ENCODE measurements at regions of chr5 and their contacts with region 1.

Region 1: GRCh38 chr5:142655339-142656267 is 30.3 kb downstream of the FGF1 start:
- DNase-seq: peak; percentile 84
- H3K4me3 Mint-ChIP-seq: no peak overlapping the region
- H3K27ac Mint-ChIP-seq: no peak overlapping the region
- H3K4me1 Mint-ChIP-seq: no peaks in the 10 kb centered on the region
- H3K27me3 Mint-ChIP-seq: no peaks in the 10 kb centered on the region
- CTCF ChIP-seq: peak; percentile 99

Region 2: GRCh38 chr5:142597546-142598341 is 57.9 kb before region 1 on chr5:
- CTCF ChIA-PET with region 1: interaction called, 14 read pairs
- POLR2A ChIA-PET with region 1: no interaction called
- intact Hi-C with region 1: no loop called
- DNase-seq: peak; percentile 89
- H3K4me3 Mint-ChIP-seq: no peak overlapping the region
- H3K27ac Mint-ChIP-seq: no peak overlapping the region
- H3K4me1 Mint-ChIP-seq: peaks cover 16% of the 10 kb centered on the region
- H3K27me3 Mint-ChIP-seq: no peaks in the 10 kb centered on the region
- CTCF ChIP-seq: peak; percentile 20

Region 3: GRCh38 chr5:142618130-142618523 is 37.5 kb before region 1 on chr5:
- CTCF ChIA-PET with region 1: interaction called, 16 read pairs
- POLR2A ChIA-PET with region 1: no interaction called
- intact Hi-C with region 1: no loop called
- DNase-seq: no peak
- H3K4me3 Mint-ChIP-seq: no peak overlapping the region
- H3K27ac Mint-ChIP-seq: no peak overlapping the region
- H3K4me1 Mint-ChIP-seq: peaks cover 12% of the 10 kb centered on the region
- H3K27me3 Mint-ChIP-seq: no peaks in the 10 kb centered on the region
- CTCF ChIP-seq: no peak

Region 4: GRCh38 chr5:142644640-142645361 is 10.8 kb before region 1 on chr5:
- CTCF ChIA-PET with region 1: interaction called, 67 read pairs
- POLR2A ChIA-PET with region 1: interaction called, 30 read pairs
- intact Hi-C with region 1: no loop called
- DNase-seq: peak; percentile 99
- H3K4me3 Mint-ChIP-seq: peak overlapping the region; percentile 48
- H3K27ac Mint-ChIP-seq: peak overlapping the region; percentile 85
- H3K4me1 Mint-ChIP-seq: peaks cover 26% of the 10 kb centered on the region
- H3K27me3 Mint-ChIP-seq: no peaks in the 10 kb centered on the region
- CTCF ChIP-seq: no peak

Region 5: GRCh38 chr5:142685418-142686209 is 30.0 kb after region 1 on chr5 and contains the start of gene FGF1:
- CTCF ChIA-PET with region 1: interaction called, 1,243 read pairs
- POLR2A ChIA-PET with region 1: interaction called, 12 read pairs
- intact Hi-C with region 1: no loop called
- DNase-seq: peak; percentile 89
- H3K4me3 Mint-ChIP-seq: peak within 1 kb of the TSS; percentile 7
- H3K27ac Mint-ChIP-seq: peak within 1 kb of the TSS; percentile 70
- H3K4me1 Mint-ChIP-seq: peaks cover 43% of the 10 kb centered on the region
- H3K27me3 Mint-ChIP-seq: no peaks in the 10 kb centered on the region
- CTCF ChIP-seq: no peak
- total RNA-seq, gene FGF1: 0.34 and 0.65 TPM in 2 replicates

Region 6: DNA sequence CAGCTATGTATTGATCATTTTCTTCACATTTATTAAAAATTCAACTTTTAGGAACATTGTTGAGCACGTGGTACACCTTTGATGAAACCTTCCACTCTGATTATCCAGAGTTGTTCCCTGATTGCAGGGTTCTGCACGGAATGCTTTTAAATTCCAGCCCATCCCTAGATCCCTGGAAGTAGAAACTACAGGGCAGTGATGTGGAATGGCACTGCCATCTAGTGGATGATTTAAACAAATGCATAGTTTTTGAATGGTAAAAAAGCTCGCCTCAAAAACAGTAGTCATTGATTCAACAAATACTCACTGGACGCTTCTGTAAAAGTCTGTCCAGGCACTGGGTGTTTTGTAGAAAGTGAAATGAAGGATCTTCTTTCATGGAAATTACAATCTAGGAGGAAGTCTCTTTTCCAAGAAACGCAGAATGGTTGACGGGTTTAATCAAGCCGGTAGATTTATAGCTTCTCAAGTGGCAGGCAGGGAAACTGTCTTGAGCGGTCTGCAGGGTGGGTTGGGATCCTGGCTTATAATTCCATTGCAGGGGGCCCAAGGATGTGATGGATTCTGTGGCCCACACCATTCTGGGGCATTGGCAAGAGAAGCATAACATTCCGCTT is 233.0 kb after region 1 on chr5:
- CTCF ChIA-PET with region 1: interaction called, 16 read pairs
- POLR2A ChIA-PET with region 1: no interaction called
- intact Hi-C with region 1: loop called (anchors 5 kb)
- DNase-seq: peak; percentile 83
- H3K4me3 Mint-ChIP-seq: no peak overlapping the region
- H3K27ac Mint-ChIP-seq: no peak overlapping the region
- H3K4me1 Mint-ChIP-seq: no peaks in the 10 kb centered on the region
- H3K27me3 Mint-ChIP-seq: no peaks in the 10 kb centered on the region
- CTCF ChIP-seq: peak; percentile 89

Region 7: GRCh38 chr5:143471666-143472464 is 816.3 kb after region 1 on chr5:
- CTCF ChIA-PET with region 1: no interaction called
- POLR2A ChIA-PET with region 1: no interaction called
- intact Hi-C with region 1: no loop called
- DNase-seq: no peak
- H3K4me3 Mint-ChIP-seq: no peak overlapping the region
- H3K27ac Mint-ChIP-seq: no peak overlapping the region
- H3K4me1 Mint-ChIP-seq: peaks cover 8% of the 10 kb centered on the region
- H3K27me3 Mint-ChIP-seq: no peaks in the 10 kb centered on the region
- CTCF ChIP-seq: no peak

Measured in MCF 10A (cell line).